Activated CD4-positive, alpha-beta memory T cell treated with anti-CD3 and anti-CD28 coated beads, Interleukin-2, amount 10 ng/mL, durations not matched to agents 7 days and 5 days (primary cell): ENCODE measurements at regions of chr16 and their contacts with region 1.

Region 1: GRCh38 chr16:53503270-53503923 is 388 bp upstream of the AKTIP start:
- DNase-seq: peak; percentile 100
- H3K4me3 Mint-ChIP-seq: peak overlapping the region; percentile 80
- H3K27ac Mint-ChIP-seq: peak overlapping the region; percentile 90
- H3K4me1 Mint-ChIP-seq: peaks cover 59% of the 10 kb centered on the region
- H3K27me3 Mint-ChIP-seq: no peaks in the 10 kb centered on the region

Region 2: GRCh38 chr16:53435066-53435688 is 68.2 kb before region 1 on chr16:
- CTCF ChIA-PET with region 1: interaction called, 17 read pairs
- POLR2A ChIA-PET with region 1: interaction called, 125 read pairs
- DNase-seq: peak; percentile 70
- H3K4me3 Mint-ChIP-seq: peak overlapping the region; percentile 97
- H3K27ac Mint-ChIP-seq: peak overlapping the region; percentile 91
- H3K4me1 Mint-ChIP-seq: peaks cover 41% of the 10 kb centered on the region
- H3K27me3 Mint-ChIP-seq: peaks cover 2% of the 10 kb centered on the region

Region 3: DNA sequence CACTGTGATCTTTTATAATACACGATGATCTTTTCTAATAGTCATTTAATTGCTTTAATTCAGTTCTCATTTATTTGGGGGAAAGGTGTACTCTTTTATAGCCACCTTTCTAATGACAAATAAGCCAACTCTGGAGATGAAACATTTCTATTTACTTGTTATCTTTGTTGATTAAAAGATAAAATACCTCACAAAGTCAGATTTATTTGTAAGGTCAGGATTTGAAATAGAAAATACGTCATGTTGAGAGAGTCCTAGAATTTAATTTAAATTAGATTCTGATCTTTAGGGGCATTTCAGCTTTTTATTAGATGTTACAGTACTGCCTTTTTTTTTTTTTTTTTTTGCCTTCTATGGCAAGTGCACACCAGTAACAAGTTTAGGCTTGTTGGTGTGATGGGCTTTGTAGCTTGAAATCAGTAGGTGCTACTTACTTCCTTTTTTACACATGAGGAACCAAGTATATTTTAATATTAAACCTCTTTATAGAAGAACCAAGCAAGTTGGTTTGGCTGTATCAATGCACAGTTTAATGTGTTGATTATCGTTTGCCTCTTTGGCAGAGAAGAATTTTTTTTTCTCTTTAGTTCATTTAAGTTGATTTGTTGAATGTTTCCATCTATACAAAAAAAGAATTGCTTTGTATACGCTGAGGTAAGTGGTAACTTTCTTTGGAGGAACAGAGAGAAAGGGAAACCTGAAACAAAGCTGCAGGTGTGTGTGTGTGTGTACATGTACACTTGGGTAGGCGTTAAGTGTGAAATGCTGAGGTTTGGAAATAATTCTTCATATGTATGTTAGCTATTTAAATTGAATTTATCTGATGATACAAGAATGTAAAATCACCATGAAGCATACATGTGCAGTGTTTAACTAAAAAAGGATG is 53.5 kb before region 1 on chr16:
- CTCF ChIA-PET with region 1: interaction called, 3 read pairs
- POLR2A ChIA-PET with region 1: interaction called, 90 read pairs
- DNase-seq: no peak
- H3K4me3 Mint-ChIP-seq: peak overlapping the region; percentile 50
- H3K27ac Mint-ChIP-seq: peak overlapping the region; percentile 66
- H3K4me1 Mint-ChIP-seq: peaks cover 63% of the 10 kb centered on the region
- H3K27me3 Mint-ChIP-seq: no peaks in the 10 kb centered on the region

Region 4: DNA sequence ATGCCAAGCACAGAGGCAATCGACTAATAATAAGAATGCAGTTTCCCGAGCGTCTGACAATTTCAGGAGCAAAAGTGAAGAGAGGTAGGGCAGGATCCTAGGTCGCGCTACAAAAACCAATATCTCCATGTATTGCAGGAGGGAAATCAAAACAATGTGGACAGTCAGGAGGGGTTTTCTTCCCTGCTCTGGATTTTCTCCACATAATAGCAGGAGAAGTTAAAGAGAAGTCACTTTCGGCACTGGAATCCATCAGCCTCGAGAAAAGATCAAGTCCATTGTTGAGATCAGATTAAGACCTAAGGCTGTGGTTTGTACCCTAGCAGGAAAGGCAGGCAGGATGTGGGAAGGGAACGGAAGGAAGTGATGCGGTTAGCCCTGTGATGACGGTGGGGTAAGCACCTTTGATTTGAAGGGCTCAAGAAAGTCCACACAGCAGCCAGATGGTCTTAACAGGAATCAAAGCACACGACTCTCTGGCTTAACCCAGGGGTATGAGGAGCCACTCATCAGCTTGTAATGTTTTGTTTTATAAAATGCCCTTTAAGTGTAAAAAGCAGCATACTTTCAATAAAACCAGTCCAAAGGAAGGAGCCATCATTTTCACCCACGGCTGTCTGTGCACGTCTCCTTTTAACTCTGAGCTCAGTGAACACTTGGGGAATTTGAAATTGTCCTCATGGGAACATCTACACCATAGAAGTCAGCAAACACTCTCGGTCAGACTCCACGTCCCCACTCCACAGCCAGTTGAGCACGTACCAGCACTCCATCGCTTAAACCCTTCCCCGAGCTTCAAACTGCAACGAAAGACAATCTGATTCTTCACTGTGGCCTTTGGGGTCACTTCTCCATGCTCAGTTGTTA is 15.4 kb after region 1 on chr16:
- CTCF ChIA-PET with region 1: interaction called, 7 read pairs
- POLR2A ChIA-PET with region 1: interaction called, 69 read pairs
- DNase-seq: peak; percentile 92
- H3K4me3 Mint-ChIP-seq: peak overlapping the region; percentile 66
- H3K27ac Mint-ChIP-seq: peak overlapping the region; percentile 91
- H3K4me1 Mint-ChIP-seq: peaks cover 52% of the 10 kb centered on the region
- H3K27me3 Mint-ChIP-seq: no peaks in the 10 kb centered on the region

Region 5: GRCh38 chr16:53881371-53881770 is 378.0 kb after region 1 on chr16:
- CTCF ChIA-PET with region 1: no interaction called
- POLR2A ChIA-PET with region 1: no interaction called
- DNase-seq: no peak
- H3K4me3 Mint-ChIP-seq: no peak overlapping the region
- H3K27ac Mint-ChIP-seq: no peak overlapping the region
- H3K4me1 Mint-ChIP-seq: no peaks in the 10 kb centered on the region
- H3K27me3 Mint-ChIP-seq: no peaks in the 10 kb centered on the region

Region 6: DNA sequence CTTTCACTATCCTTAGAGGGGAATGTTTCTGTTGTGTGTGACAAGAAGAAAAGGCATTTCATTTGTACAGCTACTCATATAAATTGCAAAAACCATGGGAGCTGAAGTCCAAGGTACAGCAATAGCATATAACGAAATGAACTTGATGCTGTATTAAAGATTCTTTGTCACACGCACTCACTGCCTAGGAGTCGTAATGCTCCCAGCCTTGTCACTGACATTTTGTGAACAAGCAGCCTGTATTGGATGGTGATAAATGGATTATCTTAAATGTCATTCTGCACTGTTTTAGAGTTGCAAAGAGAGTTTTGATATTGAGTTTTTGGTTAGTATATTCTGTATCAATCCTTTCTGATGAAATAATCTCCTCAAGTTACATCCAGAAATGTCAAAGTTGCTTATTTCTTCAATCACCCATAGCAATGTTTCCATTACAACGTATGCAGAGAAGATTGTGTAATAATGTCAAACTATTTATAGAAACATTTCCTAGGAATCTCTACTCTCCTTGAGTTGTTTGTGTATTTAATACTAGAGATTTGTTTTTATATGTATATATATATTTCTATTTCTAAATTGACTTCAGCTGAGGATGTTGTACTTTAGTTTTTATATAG is 471.2 kb after region 1 on chr16:
- CTCF ChIA-PET with region 1: no interaction called
- POLR2A ChIA-PET with region 1: no interaction called
- DNase-seq: no peak
- H3K4me3 Mint-ChIP-seq: no peak overlapping the region
- H3K27ac Mint-ChIP-seq: no peak overlapping the region
- H3K4me1 Mint-ChIP-seq: no peaks in the 10 kb centered on the region
- H3K27me3 Mint-ChIP-seq: no peaks in the 10 kb centered on the region